ENCODE measurements at regions of chr17 and their contacts with region 1.

Region 1: GRCh38 chr17:48037036-48037837 is at the start of gene COPZ2:
- DNase-seq: peak in 1 of 2 experiments; percentile 73
- H3K4me3 ChIP-seq: peak within 1 kb of the TSS; percentile 36 to 65 (median 45)
- H3K27ac ChIP-seq: no peak within 1 kb of the TSS
- H3K4me1 ChIP-seq: peaks cover 2 to 7% (median 4%) of the 10 kb centered on the region in 4 experiments; a peak in 5 of 7 replicates
- H3K27me3 ChIP-seq: peaks cover 6 to 27% (median 20%) of the 10 kb centered on the region in 4 experiments
- CTCF ChIP-seq: peak; percentile 61 to 73 (median 68)
- EP300 ChIP-seq: no peak
- POLR2A ChIP-seq: no peak
- RAD21 ChIP-seq: peak; percentile 41 to 51
- total RNA-seq, gene COPZ2: not detected in 2 replicates

Region 2: GRCh38 chr17:47882247-47882646 is 155.0 kb before region 1 on chr17:
- CTCF ChIA-PET with region 1: no interaction called
- POLR2A ChIA-PET with region 1: no interaction called
- DNase-seq: no peak
- H3K4me3 ChIP-seq: no peak overlapping the region
- H3K27ac ChIP-seq: no peak overlapping the region
- H3K4me1 ChIP-seq: peaks cover 0 to 20% (median 12%) of the 10 kb centered on the region in 4 experiments; a peak in 6 of 7 replicates
- H3K27me3 ChIP-seq: no peaks in the 10 kb centered on the region; a peak in 1 of 7 replicates
- CTCF ChIP-seq: no peak
- EP300 ChIP-seq: no peak
- POLR2A ChIP-seq: no peak
- RAD21 ChIP-seq: no peak

Region 3: GRCh38 chr17:47929218-47930000 is 107.8 kb before region 1 on chr17:
- CTCF ChIA-PET with region 1: no interaction called
- POLR2A ChIA-PET with region 1: no interaction called
- DNase-seq: no peak
- H3K4me3 ChIP-seq: no peak overlapping the region
- H3K27ac ChIP-seq: no peak overlapping the region
- H3K4me1 ChIP-seq: no peaks in the 10 kb centered on the region
- H3K27me3 ChIP-seq: no peaks in the 10 kb centered on the region
- CTCF ChIP-seq: no peak
- EP300 ChIP-seq: no peak
- POLR2A ChIP-seq: no peak
- RAD21 ChIP-seq: no peak

Region 4: DNA sequence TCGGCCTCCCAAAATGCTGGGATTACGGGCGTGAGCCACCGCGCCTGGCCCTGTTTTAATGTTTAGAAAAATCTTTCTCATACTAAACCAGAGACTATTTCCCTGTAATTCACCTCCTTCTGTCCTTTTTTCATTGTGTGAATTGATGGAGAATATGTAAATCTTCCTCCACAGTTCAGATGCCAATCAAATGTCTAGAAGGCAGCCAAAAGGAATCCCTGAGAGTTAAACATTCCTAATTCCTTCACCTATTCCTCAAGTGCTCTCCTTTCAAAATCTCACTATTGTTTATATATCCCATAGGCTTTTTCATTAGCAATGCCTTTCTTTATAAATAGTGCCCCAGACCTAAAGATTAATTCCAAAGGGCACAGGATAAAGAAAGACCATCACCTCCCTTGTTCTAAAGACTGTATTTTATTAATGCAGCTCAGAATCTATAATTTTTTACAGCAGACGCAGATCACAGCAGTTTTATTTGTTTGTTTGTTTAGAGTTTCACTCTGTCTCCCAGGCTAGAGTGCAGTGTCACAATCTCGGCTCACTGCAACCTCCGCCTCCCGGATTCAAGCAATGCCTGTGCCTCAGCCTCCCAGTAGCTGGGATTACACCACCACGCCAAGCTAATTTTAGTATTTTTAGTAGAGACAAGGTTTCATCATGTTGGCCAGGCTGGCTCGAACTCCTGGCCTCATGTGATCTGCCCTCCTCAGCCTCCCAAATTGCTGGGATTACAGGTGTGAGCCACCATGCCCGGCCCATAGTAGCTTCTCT is 30.1 kb before region 1 on chr17:
- CTCF ChIA-PET with region 1: no interaction called
- POLR2A ChIA-PET with region 1: no interaction called
- DNase-seq: no peak
- H3K4me3 ChIP-seq: no peak overlapping the region
- H3K27ac ChIP-seq: no peak overlapping the region
- H3K4me1 ChIP-seq: peaks cover 18 to 37% (median 22%) of the 10 kb centered on the region in 4 experiments
- H3K27me3 ChIP-seq: no peaks in the 10 kb centered on the region; a peak in 2 of 7 replicates
- CTCF ChIP-seq: no peak
- EP300 ChIP-seq: no peak
- POLR2A ChIP-seq: no peak
- RAD21 ChIP-seq: no peak

Region 5: DNA sequence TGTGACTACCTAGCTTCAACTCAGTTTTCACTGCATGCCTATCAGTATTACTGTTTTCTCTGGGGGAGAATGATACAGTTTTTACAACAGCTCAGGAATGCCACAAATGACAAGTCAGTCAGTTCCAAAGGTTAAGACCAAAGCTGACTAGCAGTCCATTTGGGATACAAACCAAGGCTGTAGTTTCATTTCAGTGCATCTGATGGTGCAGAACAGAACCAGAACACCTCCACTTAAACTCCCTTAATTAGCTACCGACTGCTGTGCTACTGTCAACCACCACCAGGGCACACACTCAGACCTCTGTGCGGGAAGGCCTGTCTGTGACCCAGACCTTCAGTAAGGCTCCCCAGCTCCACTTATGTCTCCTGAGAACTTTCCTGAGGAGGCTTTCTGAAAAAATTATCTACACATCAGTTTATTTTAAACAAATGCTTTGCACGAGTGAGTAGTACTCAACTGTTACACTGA is 31.3 kb after region 1 on chr17:
- CTCF ChIA-PET with region 1: interaction called, 181 read pairs
- POLR2A ChIA-PET with region 1: interaction called, 1,227 read pairs
- DNase-seq: peak in 1 of 2 experiments; percentile 62
- H3K4me3 ChIP-seq: no peak overlapping the region
- H3K27ac ChIP-seq: no peak overlapping the region
- H3K4me1 ChIP-seq: peaks cover 0 to 2% (median 0%) of the 10 kb centered on the region in 4 experiments; a peak in 1 of 7 replicates
- H3K27me3 ChIP-seq: no peaks in the 10 kb centered on the region
- CTCF ChIP-seq: peak; percentile 60 to 74 (median 69)
- EP300 ChIP-seq: no peak
- POLR2A ChIP-seq: no peak
- RAD21 ChIP-seq: peak; percentile 39 to 51

Region 6: GRCh38 chr17:48074315-48075081 is 37.3 kb after region 1 on chr17:
- CTCF ChIA-PET with region 1: interaction called, 181 read pairs
- POLR2A ChIA-PET with region 1: interaction called, 1,227 read pairs
- DNase-seq: peak in 1 of 2 experiments; percentile 83
- H3K4me3 ChIP-seq: no peak overlapping the region
- H3K27ac ChIP-seq: no peak overlapping the region
- H3K4me1 ChIP-seq: no peaks in the 10 kb centered on the region
- H3K27me3 ChIP-seq: no peaks in the 10 kb centered on the region
- CTCF ChIP-seq: peak in 2 of 3 experiments; percentile 75 to 77; a peak in 3 of 4 replicates
- EP300 ChIP-seq: no peak
- POLR2A ChIP-seq: no peak
- RAD21 ChIP-seq: peak; percentile 67 to 75

Region 7: DNA sequence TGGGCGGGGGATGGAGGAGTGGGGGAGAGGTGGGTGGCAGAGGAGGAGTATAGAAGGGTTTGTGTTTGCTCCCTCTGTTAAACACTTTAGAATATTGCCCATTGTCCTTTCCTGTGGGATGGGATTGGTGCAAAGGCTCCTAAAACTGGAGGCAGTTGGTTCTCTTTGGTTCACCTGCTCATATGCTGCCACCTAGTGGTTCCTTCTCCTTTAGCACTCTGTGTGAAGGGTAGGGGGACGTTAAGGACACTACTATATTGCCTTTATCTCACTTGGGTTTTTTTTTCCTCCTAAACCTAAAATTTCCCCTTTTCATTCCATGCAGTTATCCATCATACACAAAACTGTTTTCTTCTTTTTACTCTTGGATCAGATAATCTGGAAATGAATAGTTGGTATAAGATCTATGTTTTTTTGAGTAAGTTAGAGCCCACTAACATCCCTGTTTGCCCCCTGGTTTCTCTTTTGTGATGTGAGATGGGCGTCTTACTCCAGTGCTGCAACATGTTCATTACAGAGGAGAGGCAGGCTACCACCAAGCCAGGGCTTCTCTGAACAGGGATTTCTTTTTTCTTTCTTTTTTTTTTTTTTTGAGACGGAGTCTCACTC is 94.1 kb after region 1 on chr17:
- CTCF ChIA-PET with region 1: interaction called, 24 read pairs
- POLR2A ChIA-PET with region 1: interaction called, 4 read pairs
- DNase-seq: peak; percentile 15 to 68
- H3K4me3 ChIP-seq: no peak overlapping the region
- H3K27ac ChIP-seq: no peak overlapping the region
- H3K4me1 ChIP-seq: no peaks in the 10 kb centered on the region
- H3K27me3 ChIP-seq: no peaks in the 10 kb centered on the region
- CTCF ChIP-seq: peak; percentile 6 to 87 (median 87)
- EP300 ChIP-seq: no peak
- POLR2A ChIP-seq: no peak
- RAD21 ChIP-seq: peak; percentile 89 to 91